Activated B cell treated with CpG ODN at 0.5 μM for 24 hours (primary cell): ENCODE measurements at regions of chr20 and their contacts with region 1.

Region 1: GRCh38 chr20:49812463-49813304 is at the start of gene SLC9A8:
- DNase-seq: peak; percentile 84
- ATAC-seq: peak; percentile 88
- H3K4me3 Mint-ChIP-seq: peak within 1 kb of the TSS; percentile 95
- H3K27ac Mint-ChIP-seq: peak within 1 kb of the TSS; percentile 94
- H3K4me1 Mint-ChIP-seq: peaks cover 72% of the 10 kb centered on the region
- H3K27me3 Mint-ChIP-seq: no peaks in the 10 kb centered on the region
- CTCF ChIP-seq: no peak
- total RNA-seq, gene SLC9A8: 49.2 and 65.7 TPM in 2 replicates

Region 2: GRCh38 chr20:49054056-49054643 is 758.5 kb before region 1 on chr20:
- CTCF ChIA-PET with region 1: no interaction called
- POLR2A ChIA-PET with region 1: no interaction called
- intact Hi-C with region 1: loop called (anchors 10 kb)
- DNase-seq: no peak
- ATAC-seq: no peak
- H3K4me3 Mint-ChIP-seq: no peak overlapping the region
- H3K27ac Mint-ChIP-seq: no peak overlapping the region
- H3K4me1 Mint-ChIP-seq: peaks cover 44% of the 10 kb centered on the region
- H3K27me3 Mint-ChIP-seq: no peaks in the 10 kb centered on the region
- CTCF ChIP-seq: no peak

Region 3: GRCh38 chr20:49620364-49621240 is 192.1 kb before region 1 on chr20:
- CTCF ChIA-PET with region 1: no interaction called
- POLR2A ChIA-PET with region 1: interaction called, 14 read pairs
- intact Hi-C with region 1: loop called (anchors 1 kb)
- DNase-seq: peak; percentile 42
- ATAC-seq: peak; percentile 87
- H3K4me3 Mint-ChIP-seq: no peak overlapping the region
- H3K27ac Mint-ChIP-seq: no peak overlapping the region
- H3K4me1 Mint-ChIP-seq: peaks cover 14% of the 10 kb centered on the region
- H3K27me3 Mint-ChIP-seq: peaks cover 3% of the 10 kb centered on the region
- CTCF ChIP-seq: no peak

Region 4: GRCh38 chr20:49713753-49714712 is 98.7 kb before region 1 on chr20 and contains the start of gene B4GALT5:
- CTCF ChIA-PET with region 1: no interaction called
- POLR2A ChIA-PET with region 1: interaction called, 29 read pairs
- intact Hi-C with region 1: loop called (anchors 1 kb)
- DNase-seq: peak; percentile 81
- ATAC-seq: peak; percentile 79
- H3K4me3 Mint-ChIP-seq: peak within 1 kb of the TSS; percentile 96
- H3K27ac Mint-ChIP-seq: peak within 1 kb of the TSS; percentile 94
- H3K4me1 Mint-ChIP-seq: peaks cover 48% of the 10 kb centered on the region
- H3K27me3 Mint-ChIP-seq: no peaks in the 10 kb centered on the region
- CTCF ChIP-seq: no peak
- total RNA-seq, gene B4GALT5: 70.6 and 72.9 TPM in 2 replicates

Region 5: GRCh38 chr20:49785852-49786175 is 26.9 kb before region 1 on chr20:
- CTCF ChIA-PET with region 1: interaction called, 8 read pairs
- POLR2A ChIA-PET with region 1: interaction called, 21 read pairs
- intact Hi-C with region 1: loop called (anchors 1 kb)
- DNase-seq: peak; percentile 35
- ATAC-seq: peak; percentile 77
- H3K4me3 Mint-ChIP-seq: peak overlapping the region; percentile 78
- H3K27ac Mint-ChIP-seq: peak overlapping the region; percentile 95
- H3K4me1 Mint-ChIP-seq: peaks cover 61% of the 10 kb centered on the region
- H3K27me3 Mint-ChIP-seq: no peaks in the 10 kb centered on the region
- CTCF ChIP-seq: no peak

Region 6: GRCh38 chr20:49799698-49800097 is 13.0 kb before region 1 on chr20:
- CTCF ChIA-PET with region 1: interaction called, 3 read pairs
- POLR2A ChIA-PET with region 1: interaction called, 205 read pairs
- intact Hi-C with region 1: loop called (anchors 1 kb)
- DNase-seq: no peak
- ATAC-seq: no peak
- H3K4me3 Mint-ChIP-seq: no peak overlapping the region
- H3K27ac Mint-ChIP-seq: no peak overlapping the region
- H3K4me1 Mint-ChIP-seq: peaks cover 68% of the 10 kb centered on the region
- H3K27me3 Mint-ChIP-seq: no peaks in the 10 kb centered on the region
- CTCF ChIP-seq: no peak

Region 7: GRCh38 chr20:50731055-50731871 is 918.6 kb after region 1 on chr20 and contains the start of gene PARD6B:
- CTCF ChIA-PET with region 1: no interaction called
- POLR2A ChIA-PET with region 1: no interaction called
- intact Hi-C with region 1: loop called (anchors 10 kb)
- DNase-seq: peak; percentile 98
- ATAC-seq: peak; percentile 94
- H3K4me3 Mint-ChIP-seq: peak within 1 kb of the TSS; percentile 89
- H3K27ac Mint-ChIP-seq: peak within 1 kb of the TSS; percentile 71
- H3K4me1 Mint-ChIP-seq: peaks cover 16% of the 10 kb centered on the region
- H3K27me3 Mint-ChIP-seq: peaks cover 2% of the 10 kb centered on the region
- CTCF ChIP-seq: no peak
- total RNA-seq, gene PARD6B: 3.8 and 5.7 TPM in 2 replicates